Activated CD4-positive, alpha-beta T cell treated with anti-CD3 and anti-CD28 coated beads, Interleukin-2, amount 10 ng/mL, durations not matched to agents 24 days and 14 days (primary cell): ENCODE measurements at regions of chr9 and their contacts with region 1.

Region 1: GRCh38 chr9:114930056-114930812 is at the start of gene TNFSF8:
- DNase-seq: peak; percentile 94
- H3K4me3 Mint-ChIP-seq: peak within 1 kb of the TSS; percentile 90
- H3K27ac Mint-ChIP-seq: peak within 1 kb of the TSS; percentile 99
- H3K4me1 Mint-ChIP-seq: peaks cover 59% of the 10 kb centered on the region
- H3K27me3 Mint-ChIP-seq: no peaks in the 10 kb centered on the region
- total RNA-seq, gene TNFSF8: 148 and 150 TPM in 2 replicates

Region 2: GRCh38 chr9:114894801-114895433 is 35.3 kb before region 1 on chr9:
- intact Hi-C with region 1: loop called (anchors 2 kb)
- DNase-seq: peak; percentile 83
- H3K4me3 Mint-ChIP-seq: peak overlapping the region; percentile 32
- H3K27ac Mint-ChIP-seq: peak overlapping the region; percentile 89
- H3K4me1 Mint-ChIP-seq: peaks cover 48% of the 10 kb centered on the region
- H3K27me3 Mint-ChIP-seq: no peaks in the 10 kb centered on the region

Region 3: DNA sequence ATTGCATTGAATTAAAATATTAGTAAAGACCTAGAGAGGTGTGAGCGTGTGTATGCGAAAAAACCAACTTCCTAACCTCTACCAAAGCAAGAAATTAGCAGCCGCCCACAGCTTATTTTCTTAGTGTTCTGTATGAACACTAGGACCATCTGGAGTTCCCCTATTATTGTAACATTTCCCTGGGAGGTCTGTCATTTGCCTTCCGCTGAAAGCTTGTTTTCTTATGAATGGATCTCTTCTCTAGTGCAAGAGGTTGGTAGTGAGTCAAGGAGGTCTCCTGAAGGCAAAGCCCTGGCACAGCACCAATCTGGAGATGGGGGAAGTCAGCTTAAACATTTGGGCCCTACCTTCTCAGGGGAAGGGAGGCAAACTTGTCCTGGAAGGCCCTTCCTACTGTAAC is 10.6 kb before region 1 on chr9:
- intact Hi-C with region 1: loop called (anchors 1 kb)
- DNase-seq: peak; percentile 56
- H3K4me3 Mint-ChIP-seq: peak overlapping the region; percentile 59
- H3K27ac Mint-ChIP-seq: peak overlapping the region; percentile 78
- H3K4me1 Mint-ChIP-seq: peaks cover 89% of the 10 kb centered on the region
- H3K27me3 Mint-ChIP-seq: no peaks in the 10 kb centered on the region

Region 4: GRCh38 chr9:115013998-115014397 is 83.8 kb after region 1 on chr9:
- intact Hi-C with region 1: loop called (anchors 1 kb)
- DNase-seq: peak; percentile 93
- H3K4me3 Mint-ChIP-seq: peak overlapping the region; percentile 18
- H3K27ac Mint-ChIP-seq: peak overlapping the region; percentile 77
- H3K4me1 Mint-ChIP-seq: peaks cover 55% of the 10 kb centered on the region
- H3K27me3 Mint-ChIP-seq: peaks cover 2% of the 10 kb centered on the region